ENCODE measurements at regions of chr17 and their contacts with region 1.

Region 1: DNA sequence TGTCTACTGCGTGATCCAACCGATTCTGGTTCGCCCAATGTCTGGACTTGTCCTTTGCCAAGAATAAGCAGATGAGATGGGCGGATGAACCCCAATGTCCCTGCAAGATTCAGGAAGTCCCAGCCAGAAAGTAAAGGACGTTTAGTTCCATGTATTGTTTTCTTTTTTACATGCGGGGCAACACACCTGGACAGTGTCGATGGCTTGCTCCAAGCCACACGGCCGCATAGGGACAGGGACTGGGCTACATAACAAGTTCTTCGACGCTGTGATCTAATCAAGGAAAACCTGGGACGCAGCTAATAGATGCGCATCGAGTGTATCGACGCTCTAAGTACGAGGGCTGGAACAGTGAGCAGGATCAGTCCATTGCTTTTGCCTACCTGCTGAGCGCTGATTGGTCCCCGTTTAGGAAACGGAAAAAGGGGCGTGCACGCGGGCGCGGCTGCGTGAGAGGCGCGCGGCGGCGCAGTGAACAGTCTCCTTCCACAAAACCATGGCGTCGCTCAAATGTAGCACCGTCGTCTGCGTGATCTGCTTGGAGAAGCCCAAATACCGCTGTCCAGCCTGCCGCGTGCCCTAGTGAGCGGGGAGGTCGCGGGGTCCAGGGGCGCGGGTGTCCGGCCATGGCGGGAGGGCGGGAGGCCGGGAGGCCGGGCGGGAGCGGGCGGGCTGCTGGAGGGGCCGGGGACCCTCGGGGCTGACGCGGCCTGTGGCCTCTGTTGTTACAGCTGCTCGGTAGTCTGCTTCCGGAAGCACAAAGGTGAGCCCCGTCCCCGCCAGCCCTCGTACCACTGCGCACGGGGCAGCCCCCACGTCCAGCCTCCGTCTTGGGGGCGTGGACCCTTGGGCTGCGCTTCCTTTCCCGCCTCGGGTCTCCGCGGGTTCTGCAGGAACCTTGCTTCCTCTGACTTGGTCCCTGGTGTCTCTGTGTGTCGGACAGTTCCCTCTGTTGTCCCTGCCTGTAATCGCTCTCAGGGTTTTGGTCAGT is at the start of gene ZNHIT3:
- DNase-seq: peak; percentile 87 to 93
- ATAC-seq: peak; percentile 92 to 97 (median 96)
- H3K4me3 ChIP-seq: peak within 1 kb of the TSS; percentile 77 to 98 (median 89)
- H3K27ac ChIP-seq: peak within 1 kb of the TSS in 9 of 10 donors; percentile 73 to 89 (median 86)
- H3K4me1 ChIP-seq: peaks cover 17 to 48% (median 33%) of the 10 kb centered on the region in 9 donors
- H3K27me3 ChIP-seq: peaks cover 0 to 18% (median 11%) of the 10 kb centered on the region in 7 donors
- CTCF ChIP-seq: peak in 1 of 9 donors; percentile 7
- total RNA-seq, gene ZNHIT3: 17.1 to 27.0 (median 23.0) TPM

Region 2: GRCh38 chr17:35969558-35970380 is 516.7 kb before region 1 on chr17:
- intact Hi-C with region 1: loop called in 9 of 10 experiments (anchors 2 to 5 kb)
- DNase-seq: peak; percentile 29 to 79
- ATAC-seq: peak; percentile 59 to 78 (median 74)
- H3K4me3 ChIP-seq: no peak overlapping the region
- H3K27ac ChIP-seq: no peak overlapping the region
- H3K4me1 ChIP-seq: peaks cover 0 to 28% (median 14%) of the 10 kb centered on the region in 9 donors
- H3K27me3 ChIP-seq: no peaks in the 10 kb centered on the region
- CTCF ChIP-seq: peak; percentile 77 to 90 (median 86)

Region 3: GRCh38 chr17:36534840-36535668 is 48.6 kb after region 1 on chr17 and contains the starts of genes MYO19 and PIGW:
- intact Hi-C with region 1: loop called in 2 of 10 experiments (anchors 10 kb)
- DNase-seq: peak; percentile 86 to 90
- ATAC-seq: peak; percentile 92 to 96 (median 94)
- H3K4me3 ChIP-seq: peak within 1 kb of the TSS; percentile 55 to 89 (median 78)
- H3K27ac ChIP-seq: peak within 1 kb of the TSS; percentile 86 to 99 (median 96)
- H3K4me1 ChIP-seq: peaks cover 0 to 24% (median 15%) of the 10 kb centered on the region in 9 donors
- H3K27me3 ChIP-seq: no peaks in the 10 kb centered on the region
- CTCF ChIP-seq: peak in 3 of 9 donors; percentile 30 to 40 (median 34)
- total RNA-seq, gene MYO19: 8.8 to 22.9 (median 13.9) TPM
- total RNA-seq, gene PIGW: 4.0 to 10.2 (median 6.5) TPM

Region 4: DNA sequence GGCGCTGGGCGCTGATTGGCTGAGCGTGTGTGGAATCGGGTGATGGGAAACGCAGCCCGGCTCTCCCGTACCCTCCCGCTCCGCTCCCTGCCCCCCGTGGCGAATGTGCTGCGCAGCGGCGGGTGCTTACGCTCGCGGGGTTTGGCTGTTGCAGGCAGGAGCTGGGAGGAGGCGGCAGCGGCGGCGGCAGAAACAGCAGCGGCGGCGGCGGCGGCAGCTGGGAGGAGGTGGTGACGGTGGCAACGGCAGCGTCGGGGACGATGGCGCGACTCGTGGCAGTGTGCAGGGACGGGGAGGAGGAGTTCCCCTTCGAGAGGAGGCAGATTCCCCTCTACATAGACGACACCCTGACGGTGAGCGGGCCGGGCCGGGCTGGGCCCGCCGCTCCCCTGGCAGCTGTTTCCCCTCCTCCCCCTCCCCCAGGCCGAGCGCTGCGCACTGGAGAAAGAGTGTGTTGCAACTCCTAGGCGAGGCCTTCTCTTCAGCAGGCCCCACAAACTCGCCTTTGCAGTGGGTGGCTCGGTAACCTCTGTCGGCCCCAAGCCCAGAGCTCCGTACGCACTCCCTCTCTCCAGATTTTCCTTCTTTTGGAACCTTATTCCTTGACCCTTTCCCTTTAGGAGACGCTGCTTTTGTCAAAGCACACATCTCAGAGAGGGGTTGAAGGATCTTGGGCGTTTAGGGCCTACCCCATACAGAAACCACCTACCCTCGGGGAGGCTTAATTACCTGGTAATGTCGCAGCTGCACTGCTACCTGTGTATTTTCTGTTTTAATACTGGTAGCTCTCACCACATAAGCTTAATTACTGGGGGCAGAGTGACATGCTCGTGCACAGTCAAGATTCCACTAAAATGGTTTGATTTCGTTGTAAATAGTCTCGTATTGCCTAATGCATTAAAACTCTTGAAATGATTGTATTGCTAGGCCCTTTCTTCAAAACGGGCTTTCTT is 59.2 kb after region 1 on chr17:
- intact Hi-C with region 1: loop called in 1 of 10 experiments (anchors 10 kb)
- DNase-seq: peak; percentile 96 to 97
- ATAC-seq: peak; percentile 89 to 95 (median 92)
- H3K4me3 ChIP-seq: peak overlapping the region; percentile 69 to 98 (median 86)
- H3K27ac ChIP-seq: peak overlapping the region; percentile 97 to 100 (median 100)
- H3K4me1 ChIP-seq: peaks cover 16 to 56% (median 49%) of the 10 kb centered on the region in 9 donors
- H3K27me3 ChIP-seq: no peaks in the 10 kb centered on the region
- CTCF ChIP-seq: no peak

Region 5: DNA sequence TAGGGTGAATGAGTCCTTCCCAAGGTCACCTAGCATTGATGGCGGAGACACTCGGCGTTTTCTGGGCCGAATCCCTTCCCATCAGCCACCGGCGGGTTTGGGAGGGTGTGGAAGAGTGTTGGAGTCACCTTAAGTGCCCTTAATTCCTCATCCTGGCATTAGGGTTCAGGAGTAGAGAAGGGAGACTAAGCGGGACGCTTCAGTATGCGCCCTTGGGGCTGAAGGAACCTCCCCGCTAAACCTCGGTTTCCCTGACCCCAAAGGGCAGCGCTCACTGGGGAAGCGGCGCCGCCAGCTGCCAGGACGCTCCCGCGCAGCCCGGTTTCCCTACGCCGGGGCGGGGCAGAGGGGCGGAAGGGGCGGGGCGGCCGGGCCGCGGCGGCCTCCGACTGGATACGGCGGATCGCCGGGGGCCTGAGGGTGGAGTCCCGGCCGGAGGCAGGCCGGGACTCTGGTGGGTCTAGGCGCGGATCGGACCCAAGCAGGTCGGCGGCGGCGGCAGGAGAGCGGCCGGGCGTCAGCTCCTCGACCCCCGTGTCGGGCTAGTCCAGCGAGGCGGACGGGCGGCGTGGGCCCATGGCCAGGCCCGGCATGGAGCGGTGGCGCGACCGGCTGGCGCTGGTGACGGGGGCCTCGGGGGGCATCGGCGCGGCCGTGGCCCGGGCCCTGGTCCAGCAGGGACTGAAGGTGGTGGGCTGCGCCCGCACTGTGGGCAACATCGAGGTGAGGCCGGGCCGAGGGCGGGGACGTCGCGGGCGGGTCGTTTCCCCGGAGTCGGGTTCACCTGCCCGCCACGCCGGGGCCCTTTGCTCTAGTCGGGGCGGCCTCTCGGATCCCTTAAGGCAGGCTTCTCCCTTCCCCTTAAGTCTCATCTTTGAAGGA is 105.2 kb after region 1 on chr17 and contains the start of gene DHRS11:
- intact Hi-C with region 1: loop called in 1 of 10 experiments (anchors 10 kb)
- DNase-seq: peak; percentile 84 to 90
- ATAC-seq: peak; percentile 94 to 99 (median 95)
- H3K4me3 ChIP-seq: peak within 1 kb of the TSS; percentile 59 to 98 (median 91)
- H3K27ac ChIP-seq: peak within 1 kb of the TSS in 9 of 10 donors; percentile 72 to 86 (median 80)
- H3K4me1 ChIP-seq: peaks cover 0 to 33% (median 20%) of the 10 kb centered on the region in 9 donors
- H3K27me3 ChIP-seq: no peaks in the 10 kb centered on the region
- CTCF ChIP-seq: peak in 3 of 9 donors; percentile 6 to 36 (median 29)
- total RNA-seq, gene DHRS11: 11.0 to 24.7 (median 18.9) TPM